ENCODE measurements at regions of chr19 and their contacts with region 1.

Region 1: GRCh38 chr19:40139533-40140287 is 49.0 kb upstream of the ZNF780A start:
- DNase-seq: no peak
- H3K4me3 ChIP-seq: no peak overlapping the region
- H3K27ac ChIP-seq: no peak overlapping the region
- H3K4me1 ChIP-seq: peaks cover 14% of the 10 kb centered on the region
- H3K27me3 ChIP-seq: peaks cover 33% of the 10 kb centered on the region
- CTCF ChIP-seq: peak; percentile 81

Region 2: GRCh38 chr19:40221858-40222837 is 82.4 kb after region 1 on chr19:
- intact Hi-C with region 1: loop called (anchors 5 kb)
- DNase-seq: peak; percentile 67
- H3K4me3 ChIP-seq: no peak overlapping the region
- H3K27ac ChIP-seq: no peak overlapping the region
- H3K4me1 ChIP-seq: peaks cover 26% of the 10 kb centered on the region
- H3K27me3 ChIP-seq: peaks cover 85% of the 10 kb centered on the region
- CTCF ChIP-seq: peak; percentile 92

Region 3: DNA sequence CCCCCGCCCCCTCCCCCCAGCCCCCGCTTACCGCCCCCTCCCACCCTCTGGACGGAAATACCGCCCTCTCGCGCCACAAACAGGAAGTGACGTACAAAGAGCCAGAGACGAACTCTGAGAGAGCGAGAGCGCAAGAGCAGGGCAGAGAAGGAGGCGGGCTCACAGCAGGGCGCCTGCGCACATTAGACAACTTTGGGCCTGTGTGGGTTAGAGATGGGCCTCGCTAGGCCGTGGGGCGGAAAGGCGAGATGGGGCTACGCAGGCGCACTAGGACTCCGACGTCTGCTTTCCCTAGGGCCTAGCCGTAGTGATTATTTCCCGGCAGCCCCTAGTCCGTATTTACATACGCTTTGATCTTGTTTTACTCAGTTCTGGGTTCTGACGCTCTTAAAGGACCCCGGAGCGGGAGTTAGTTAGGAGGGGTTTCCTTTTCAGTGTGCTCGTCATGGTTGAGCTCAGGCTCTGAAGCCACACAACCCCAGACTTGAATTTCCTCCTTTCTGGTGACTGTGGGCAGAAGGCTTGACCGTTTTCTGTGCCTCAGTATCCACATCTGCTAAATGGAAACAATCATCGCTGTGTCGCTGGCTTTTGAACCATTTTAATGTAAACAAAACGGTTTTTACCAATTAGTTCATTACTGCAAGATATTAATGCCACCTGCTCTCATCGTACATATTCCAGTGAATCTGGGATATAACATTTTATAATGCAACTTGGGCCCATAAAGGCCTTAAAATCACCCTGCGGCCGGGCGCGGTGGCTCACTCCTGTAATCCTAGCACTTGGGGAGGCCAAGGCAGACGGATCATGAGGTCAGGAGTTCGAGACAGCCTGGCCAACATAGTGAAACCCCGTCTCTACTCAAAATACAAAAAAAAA is 145.9 kb after region 1 on chr19:
- intact Hi-C with region 1: no loop called
- DNase-seq: peak; percentile 99
- H3K4me3 ChIP-seq: peak overlapping the region; percentile 83
- H3K27ac ChIP-seq: peak overlapping the region; percentile 95
- H3K4me1 ChIP-seq: peaks cover 51% of the 10 kb centered on the region
- H3K27me3 ChIP-seq: no peaks in the 10 kb centered on the region
- CTCF ChIP-seq: no peak

Region 4: DNA sequence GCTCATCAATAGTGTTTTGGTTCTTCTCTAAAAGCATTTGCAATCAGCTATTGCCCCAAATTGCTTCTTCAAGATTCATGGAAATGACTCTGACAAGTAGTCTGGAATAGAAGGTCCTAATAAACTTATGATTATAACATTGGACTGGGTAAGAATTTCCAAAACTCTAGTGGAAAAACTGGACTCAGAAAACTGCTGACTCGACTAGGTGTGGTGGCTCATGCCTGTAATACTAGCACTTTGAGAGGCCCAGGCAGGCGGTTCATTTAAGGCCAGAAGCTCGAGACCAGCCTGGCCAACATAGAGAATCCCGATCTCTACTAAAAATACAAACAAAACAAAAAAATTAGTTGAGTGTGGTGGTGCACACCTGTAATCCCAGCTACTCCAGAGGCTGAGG is 161.0 kb after region 1 on chr19:
- intact Hi-C with region 1: no loop called
- DNase-seq: no peak
- H3K4me3 ChIP-seq: no peak overlapping the region
- H3K27ac ChIP-seq: no peak overlapping the region
- H3K4me1 ChIP-seq: no peaks in the 10 kb centered on the region
- H3K27me3 ChIP-seq: no peaks in the 10 kb centered on the region
- CTCF ChIP-seq: no peak